ENCODE measurements at regions of chr1 and their contacts with region 1.

Region 1: DNA sequence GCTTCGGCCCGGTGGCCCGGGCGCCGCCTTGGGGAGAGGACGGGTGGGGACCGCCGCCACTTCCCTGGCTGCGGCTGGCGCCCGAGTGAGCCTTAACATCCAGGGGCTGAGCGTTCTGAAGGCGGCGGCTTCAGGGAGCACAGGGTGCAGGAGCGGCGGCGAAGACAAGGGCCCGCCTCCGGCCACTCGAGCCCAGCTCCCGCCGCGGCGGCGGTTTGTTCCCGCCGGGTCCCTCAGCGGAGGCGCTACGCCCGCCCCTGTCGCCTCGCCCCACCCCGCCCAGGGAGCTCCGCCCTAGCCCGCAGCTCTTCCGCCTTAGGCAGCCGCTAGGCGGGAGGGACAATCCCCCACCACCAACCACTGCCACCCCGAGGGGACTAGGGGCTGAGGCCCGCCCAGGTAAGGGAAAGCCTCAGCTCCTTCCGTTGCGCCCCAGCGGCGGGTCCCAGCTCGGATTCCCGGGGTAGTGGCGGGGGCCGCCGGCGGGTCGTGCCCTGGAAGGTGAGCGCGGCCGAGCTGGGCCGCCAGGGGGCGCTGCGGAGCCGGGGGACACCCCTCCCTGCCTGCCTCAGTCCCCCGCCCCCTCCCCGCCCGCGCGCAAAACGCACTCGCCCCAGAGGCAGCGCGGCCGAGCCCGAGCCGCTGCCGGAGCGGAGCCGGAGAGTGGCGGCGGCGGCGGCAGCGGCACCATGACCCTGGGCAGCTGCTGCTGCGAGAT is at the start of gene FOXD2:
- DNase-seq: peak; percentile 75 to 94 (median 86)
- ATAC-seq: peak; percentile 85 to 87 (median 86)
- H3K4me3 ChIP-seq: peak within 1 kb of the TSS; percentile 58 to 66
- H3K4me3 Mint-ChIP-seq: peak within 1 kb of the TSS in 2 of 3 donors; percentile 83 to 88
- H3K27ac ChIP-seq: peak within 1 kb of the TSS; percentile 38
- H3K27ac Mint-ChIP-seq: peak within 1 kb of the TSS in 1 of 2 donors; percentile 73
- H3K4me1 ChIP-seq: peaks cover 0 to 45% of the 10 kb centered on the region in 2 experiments
- H3K4me1 Mint-ChIP-seq: peaks cover 30 to 34% (median 30%) of the 10 kb centered on the region in 3 donors
- H3K27me3 ChIP-seq: peaks cover 15 to 65% of the 10 kb centered on the region in 2 experiments
- H3K27me3 Mint-ChIP-seq: peaks cover 14 to 15% of the 10 kb centered on the region in 2 donors
- total RNA-seq, gene FOXD2: 0.42 to 0.76 (median 0.56) TPM

Region 2: GRCh38 chr1:47313915-47314664 is 123.5 kb before region 1 on chr1 and contains the start of gene STIL:
- CTCF ChIA-PET with region 1: interaction called in 1 of 2 experiments, 14 read pairs
- POLR2A ChIA-PET with region 1: no interaction called
- DNase-seq: peak; percentile 85 to 98 (median 93)
- ATAC-seq: peak; percentile 95 to 99 (median 98)
- H3K4me3 ChIP-seq: peak within 1 kb of the TSS; percentile 63 to 87
- H3K4me3 Mint-ChIP-seq: peak within 1 kb of the TSS; percentile 92 to 96 (median 93)
- H3K27ac ChIP-seq: peak within 1 kb of the TSS; percentile 76
- H3K27ac Mint-ChIP-seq: peak within 1 kb of the TSS; percentile 93 to 98
- H3K4me1 ChIP-seq: peaks cover 3 to 14% of the 10 kb centered on the region in 2 experiments
- H3K4me1 Mint-ChIP-seq: peaks cover 15 to 18% (median 16%) of the 10 kb centered on the region in 3 donors
- H3K27me3 ChIP-seq: peaks cover 0 to 2% of the 10 kb centered on the region in 2 experiments
- H3K27me3 Mint-ChIP-seq: no peaks in the 10 kb centered on the region
- total RNA-seq, gene STIL: 0.85 to 3.4 (median 1.7) TPM

Region 3: DNA sequence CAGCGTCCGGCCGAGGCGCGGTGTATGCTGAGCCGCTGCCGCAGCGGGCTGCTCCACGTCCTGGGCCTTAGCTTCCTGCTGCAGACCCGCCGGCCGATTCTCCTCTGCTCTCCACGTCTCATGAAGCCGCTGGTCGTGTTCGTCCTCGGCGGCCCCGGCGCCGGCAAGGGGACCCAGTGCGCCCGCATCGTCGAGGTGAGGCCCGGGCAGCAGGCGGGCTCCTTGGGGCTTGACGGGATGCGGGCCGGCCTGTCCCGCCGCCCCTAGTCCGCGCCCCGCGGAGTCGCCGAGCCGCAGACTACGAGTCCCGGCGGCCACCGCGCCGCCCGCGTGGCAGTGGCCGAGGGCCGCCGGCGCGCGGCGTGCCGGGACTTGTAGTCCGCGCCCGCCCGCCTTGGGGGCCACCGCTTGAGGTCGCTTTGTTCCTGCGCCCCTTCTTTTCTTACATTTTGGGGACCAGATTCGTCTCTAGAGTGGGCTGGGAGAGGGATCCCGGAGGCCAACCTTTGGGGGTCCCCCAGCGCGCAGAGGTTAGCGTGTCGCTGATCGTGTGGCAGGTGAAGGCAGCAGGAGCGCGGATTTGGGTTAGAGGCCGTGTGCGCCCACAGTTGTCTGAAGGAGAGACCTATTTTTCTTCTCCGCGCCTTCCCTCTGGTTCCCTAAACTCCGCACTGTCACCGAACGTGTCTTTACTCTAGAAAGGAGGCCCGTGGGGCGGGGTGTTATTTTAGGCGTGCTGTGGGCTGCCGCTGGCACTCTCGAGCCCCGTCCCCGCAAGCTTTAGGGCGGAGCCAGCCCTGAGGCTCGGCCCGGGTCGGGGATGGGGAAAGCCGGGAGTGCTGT is 103.5 kb before region 1 on chr1:
- CTCF ChIA-PET with region 1: interaction called, 3 to 11 read pairs
- POLR2A ChIA-PET with region 1: no interaction called
- DNase-seq: peak; percentile 32 to 85 (median 62)
- ATAC-seq: peak; percentile 90 to 95 (median 92)
- H3K4me3 ChIP-seq: peak overlapping the region; percentile 60 to 88
- H3K4me3 Mint-ChIP-seq: peak overlapping the region in 1 of 3 donors; percentile 89
- H3K27ac ChIP-seq: peak overlapping the region; percentile 86
- H3K27ac Mint-ChIP-seq: peak overlapping the region; percentile 86 to 91
- H3K4me1 ChIP-seq: peaks cover 5 to 27% of the 10 kb centered on the region in 2 experiments
- H3K4me1 Mint-ChIP-seq: peaks cover 24 to 30% (median 29%) of the 10 kb centered on the region in 3 donors
- H3K27me3 ChIP-seq: no peaks in the 10 kb centered on the region
- H3K27me3 Mint-ChIP-seq: no peaks in the 10 kb centered on the region

Region 4: GRCh38 chr1:47710329-47711071 is 272.9 kb after region 1 on chr1:
- CTCF ChIA-PET with region 1: interaction called in 1 of 2 experiments, 15 read pairs
- POLR2A ChIA-PET with region 1: no interaction called
- DNase-seq: peak in 32 of 35 experiments; percentile 12 to 73 (median 46)
- ATAC-seq: peak; percentile 63 to 75 (median 72)
- H3K4me3 ChIP-seq: peak overlapping the region in 1 of 2 donors; percentile 36
- H3K4me3 Mint-ChIP-seq: peak overlapping the region in 2 of 3 donors; percentile 53 to 55
- H3K27ac ChIP-seq: no peak overlapping the region
- H3K27ac Mint-ChIP-seq: peak overlapping the region in 1 of 2 donors; percentile 46
- H3K4me1 ChIP-seq: peaks cover 0 to 25% of the 10 kb centered on the region in 2 experiments
- H3K4me1 Mint-ChIP-seq: peaks cover 0 to 20% (median 16%) of the 10 kb centered on the region in 3 donors
- H3K27me3 ChIP-seq: peaks cover 22 to 69% of the 10 kb centered on the region in 2 experiments
- H3K27me3 Mint-ChIP-seq: peaks cover 56 to 79% of the 10 kb centered on the region in 2 donors

Region 5: DNA sequence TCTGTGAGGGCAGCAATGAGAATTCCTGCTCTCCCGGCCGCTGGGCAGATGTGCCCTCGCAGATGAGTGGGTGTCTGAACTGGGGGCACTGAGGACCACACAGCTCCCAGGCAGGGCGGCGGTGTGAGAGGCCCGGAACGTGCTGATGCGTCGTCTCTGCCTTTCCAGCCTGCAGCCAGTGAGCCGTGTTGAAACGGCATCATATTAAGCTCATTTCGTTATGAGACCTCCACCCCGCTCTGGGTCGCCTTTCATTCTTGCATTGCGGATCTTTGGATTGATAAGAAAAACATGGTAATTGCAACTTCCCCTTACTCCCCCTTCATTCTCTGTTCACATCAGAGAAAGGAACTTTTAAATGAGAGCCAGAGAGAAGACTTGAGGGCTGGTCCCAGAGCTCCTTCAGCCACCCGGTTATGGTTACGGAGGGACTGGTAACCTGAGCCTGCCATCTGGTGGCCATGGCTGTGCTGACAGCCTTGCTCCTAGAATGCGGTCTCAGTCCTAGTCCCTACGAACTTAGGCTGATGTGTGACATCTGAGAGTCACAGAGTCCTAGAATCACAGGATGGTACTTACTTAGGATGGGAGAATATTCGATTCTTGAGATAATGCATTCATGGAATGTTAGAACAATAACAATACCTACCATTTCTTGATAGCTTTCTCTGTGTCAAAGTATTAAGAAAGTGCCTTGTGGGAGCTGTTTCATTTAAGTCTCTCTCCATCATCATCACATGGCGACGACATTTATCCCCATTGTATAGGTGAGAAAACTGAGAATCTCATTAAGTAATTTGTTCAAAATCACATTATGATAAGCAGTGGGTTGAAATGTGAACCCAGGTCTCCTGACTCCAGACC is 288.6 kb after region 1 on chr1:
- CTCF ChIA-PET with region 1: interaction called, 4 to 24 read pairs
- POLR2A ChIA-PET with region 1: no interaction called
- DNase-seq: peak; percentile 7 to 69 (median 44)
- ATAC-seq: peak; percentile 78 to 88 (median 83)
- H3K4me3 ChIP-seq: no peak overlapping the region
- H3K4me3 Mint-ChIP-seq: peak overlapping the region; percentile 51 to 60 (median 60)
- H3K27ac ChIP-seq: no peak overlapping the region
- H3K27ac Mint-ChIP-seq: no peak overlapping the region
- H3K4me1 ChIP-seq: peaks cover 0 to 9% of the 10 kb centered on the region in 2 experiments
- H3K4me1 Mint-ChIP-seq: peaks cover 9 to 12% (median 11%) of the 10 kb centered on the region in 3 donors
- H3K27me3 ChIP-seq: peaks cover 10 to 53% of the 10 kb centered on the region in 2 experiments
- H3K27me3 Mint-ChIP-seq: peaks cover 42 to 56% of the 10 kb centered on the region in 2 donors